Motor neuron (in vitro differentiated cells): ENCODE measurements at regions of chr11 and their contacts with region 1.

Region 1: GRCh38 chr11:30365793-30366517 is 43.1 kb downstream of the ARL14EP start:
- ATAC-seq: no peak
- H3K4me3 ChIP-seq: no peak overlapping the region
- H3K27ac ChIP-seq: no peak overlapping the region
- H3K4me1 ChIP-seq: peaks cover 12 to 15% of the 10 kb centered on the region in 2 donors

Region 2: GRCh38 chr11:30586251-30587144 is 220.5 kb after region 1 on chr11 and contains the start of gene MPPED2:
- in situ Hi-C with region 1: loop called in 1 of 9 experiments (anchors 25 kb)
- ATAC-seq: peak; percentile 75 to 89 (median 78)
- H3K4me3 ChIP-seq: peak within 1 kb of the TSS; percentile 57 to 83 (median 69)
- H3K27ac ChIP-seq: peak within 1 kb of the TSS; percentile 82 to 91
- H3K4me1 ChIP-seq: peaks cover 13 to 17% of the 10 kb centered on the region in 2 donors
- total RNA-seq, gene MPPED2: 0.56 to 25.6 (median 11.8) TPM

Region 3: DNA sequence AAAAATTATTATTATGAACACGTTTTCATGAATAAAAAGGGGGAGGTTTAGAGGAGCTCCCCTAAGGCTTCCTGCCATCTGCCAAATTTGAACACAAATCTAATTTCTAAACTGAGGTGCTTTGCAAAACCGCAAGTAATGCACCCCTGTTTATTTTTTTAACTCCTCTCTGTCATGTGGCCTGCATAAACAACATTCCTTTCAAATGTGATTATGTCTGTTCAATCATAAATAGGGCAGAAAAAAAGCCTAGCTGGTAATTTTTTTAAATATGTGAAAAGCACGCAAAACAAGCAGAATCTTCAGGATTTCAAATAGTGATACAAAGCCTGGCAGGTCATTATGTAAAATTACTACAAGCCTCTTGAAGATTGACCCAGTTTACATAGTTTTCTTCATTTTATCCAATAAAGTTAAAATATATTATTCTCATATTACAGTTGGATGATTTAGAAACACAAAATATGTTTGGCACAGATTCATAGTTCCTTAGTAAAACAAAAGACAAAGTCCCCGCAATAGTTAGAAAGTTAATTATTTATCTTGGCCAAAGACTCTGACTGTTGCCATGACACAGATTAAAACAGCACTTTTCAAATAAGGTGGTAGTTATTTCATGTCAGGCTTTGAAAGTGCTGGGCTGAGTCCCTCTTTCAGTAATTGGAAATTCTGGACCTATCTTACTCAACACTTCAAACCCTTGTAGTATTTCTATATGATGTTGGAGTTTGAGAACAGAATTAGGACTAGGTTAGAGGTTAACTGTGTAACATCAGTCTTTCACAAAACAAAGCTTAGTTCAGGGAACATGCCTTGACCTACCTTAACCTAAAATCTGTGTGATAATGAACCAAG is 420.5 kb after region 1 on chr11:
- in situ Hi-C with region 1: no loop called
- ATAC-seq: no peak
- H3K4me3 ChIP-seq: no peak overlapping the region
- H3K27ac ChIP-seq: no peak overlapping the region
- H3K4me1 ChIP-seq: no peaks in the 10 kb centered on the region

Region 4: GRCh38 chr11:30855383-30856006 is 489.5 kb after region 1 on chr11:
- in situ Hi-C with region 1: loop called in 1 of 9 experiments (anchors 25 kb)
- ATAC-seq: peak in 1 of 8 experiments; percentile 26
- H3K4me3 ChIP-seq: no peak overlapping the region
- H3K27ac ChIP-seq: no peak overlapping the region
- H3K4me1 ChIP-seq: peaks cover 12 to 13% of the 10 kb centered on the region in 2 donors

Region 5: GRCh38 chr11:31118566-31118965 is 752.6 kb after region 1 on chr11:
- in situ Hi-C with region 1: no loop called
- ATAC-seq: no peak
- H3K4me3 ChIP-seq: no peak overlapping the region
- H3K27ac ChIP-seq: no peak overlapping the region
- H3K4me1 ChIP-seq: no peaks in the 10 kb centered on the region